HepG2 (cell line): ENCODE measurements at regions of chr1 and their contacts with region 1.

Region 1: GRCh38 chr1:92315766-92316599 is 17.1 kb downstream of the RPAP2 start:
- DNase-seq: no peak
- ATAC-seq: no peak
- H3K4me3 ChIP-seq: no peak overlapping the region
- H3K27ac ChIP-seq: no peak overlapping the region
- H3K4me1 ChIP-seq: no peaks in the 10 kb centered on the region
- H3K27me3 ChIP-seq: no peaks in the 10 kb centered on the region
- CTCF ChIP-seq: no peak
- EP300 ChIP-seq: no peak
- POLR2A ChIP-seq: no peak
- RAD21 ChIP-seq: no peak

Region 2: GRCh38 chr1:92244376-92244775 is 71.6 kb before region 1 on chr1:
- CTCF ChIA-PET with region 1: no interaction called
- POLR2A ChIA-PET with region 1: no interaction called
- in situ Hi-C with region 1: no loop called
- intact Hi-C with region 1: no loop called
- DNase-seq: no peak
- ATAC-seq: no peak
- H3K4me3 ChIP-seq: no peak overlapping the region
- H3K27ac ChIP-seq: no peak overlapping the region
- H3K4me1 ChIP-seq: no peaks in the 10 kb centered on the region
- H3K27me3 ChIP-seq: no peaks in the 10 kb centered on the region
- CTCF ChIP-seq: no peak
- EP300 ChIP-seq: no peak
- POLR2A ChIP-seq: no peak
- RAD21 ChIP-seq: no peak

Region 3: GRCh38 chr1:92333668-92334067 is 17.7 kb after region 1 on chr1:
- CTCF ChIA-PET with region 1: no interaction called
- POLR2A ChIA-PET with region 1: no interaction called
- in situ Hi-C with region 1: no loop called
- intact Hi-C with region 1: loop called (anchors 2 kb)
- DNase-seq: no peak
- ATAC-seq: no peak
- H3K4me3 ChIP-seq: no peak overlapping the region
- H3K27ac ChIP-seq: no peak overlapping the region
- H3K4me1 ChIP-seq: no peaks in the 10 kb centered on the region
- H3K27me3 ChIP-seq: no peaks in the 10 kb centered on the region; a peak in 1 of 5 replicates
- CTCF ChIP-seq: no peak
- EP300 ChIP-seq: no peak
- POLR2A ChIP-seq: no peak
- RAD21 ChIP-seq: no peak